HepG2 (cell line): ENCODE measurements at regions of chr16 and their contacts with region 1.

Region 1: DNA sequence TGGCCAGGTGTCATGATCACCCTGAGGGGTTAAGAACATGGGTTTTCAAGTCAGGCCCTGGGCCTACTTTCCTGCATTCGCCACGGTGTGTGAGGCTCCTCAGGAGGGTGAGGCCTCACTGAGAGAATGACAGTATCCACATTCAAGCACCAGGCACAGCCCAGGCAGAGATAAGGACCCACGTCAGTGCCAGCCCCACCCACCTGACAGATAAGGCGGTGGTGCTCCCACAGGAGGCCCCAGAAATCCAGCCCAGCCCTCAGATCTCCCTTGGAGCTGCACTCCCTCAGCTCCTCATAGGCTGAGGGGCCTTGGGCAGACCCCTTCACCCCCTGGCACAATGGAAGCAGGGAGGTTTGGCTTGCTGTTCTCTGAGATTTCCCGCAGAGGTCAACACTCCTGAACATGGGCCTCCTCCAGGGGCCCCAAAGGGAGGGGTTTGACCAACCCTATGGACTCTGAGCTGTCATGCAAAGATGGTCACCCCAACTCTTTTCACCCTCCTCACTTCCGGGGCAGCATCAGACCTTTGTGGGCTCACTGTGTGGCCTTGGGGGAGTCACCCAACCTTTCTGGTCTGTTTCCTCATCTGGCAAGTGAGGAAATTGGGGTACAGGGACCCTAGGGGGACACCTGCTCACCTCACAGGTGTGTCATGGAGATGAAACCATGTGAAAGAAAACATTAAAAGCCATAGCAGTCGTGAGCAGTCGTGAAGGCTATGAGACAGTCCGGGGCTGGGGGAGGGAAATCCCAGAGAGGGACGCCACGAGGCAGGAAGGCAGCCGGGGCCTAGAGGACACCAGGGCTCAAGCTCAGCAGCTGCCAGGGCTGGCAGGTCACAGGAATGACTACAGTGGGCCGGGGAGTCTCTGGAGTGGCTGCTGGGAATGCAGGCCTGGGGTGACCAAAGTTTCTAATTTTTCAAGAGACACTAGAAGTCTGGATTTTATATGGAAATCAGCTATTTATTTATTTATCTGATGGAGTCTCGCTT is 15.4 kb downstream of the PLLP start:
- DNase-seq: peak; percentile 56
- ATAC-seq: peak; percentile 40
- H3K4me3 ChIP-seq: peak overlapping the region in 1 of 3 experiments; percentile 29; a peak in 2 of 6 replicates
- H3K27ac ChIP-seq: peak overlapping the region; percentile 29
- H3K4me1 ChIP-seq: peaks cover 82% of the 10 kb centered on the region
- H3K27me3 ChIP-seq: no peaks in the 10 kb centered on the region
- CTCF ChIP-seq: no peak
- EP300 ChIP-seq: no peak
- POLR2A ChIP-seq: no peak
- RAD21 ChIP-seq: no peak

Region 2: DNA sequence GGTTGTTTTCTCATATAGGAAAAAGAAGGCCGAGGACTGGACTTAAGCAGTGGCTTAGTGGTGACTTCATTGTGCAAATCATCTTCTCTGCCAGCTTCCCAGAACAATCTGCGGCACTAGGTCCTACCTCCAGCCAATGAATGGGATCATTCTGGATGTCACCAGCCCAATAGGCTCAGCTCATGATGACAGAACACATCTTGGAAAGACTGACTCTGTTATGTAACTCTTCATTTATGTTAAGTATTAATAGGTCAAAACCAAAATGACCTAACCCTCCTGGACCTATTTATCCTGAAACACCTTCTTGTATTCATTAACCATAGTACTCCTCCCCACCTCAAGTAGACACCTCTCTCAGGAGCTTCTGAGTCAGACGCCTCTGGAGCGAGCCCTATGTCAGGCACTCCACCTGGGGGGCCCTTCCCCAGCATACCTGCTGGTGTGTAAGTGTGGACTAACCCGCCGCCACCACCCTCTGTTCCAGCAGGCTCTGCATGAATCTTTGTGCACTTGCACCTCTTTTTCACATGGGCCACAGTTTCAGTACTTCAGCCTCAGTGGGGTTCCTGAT is 16.9 kb before region 1 on chr16:
- CTCF ChIA-PET with region 1: no interaction called
- POLR2A ChIA-PET with region 1: no interaction called
- in situ Hi-C with region 1: no loop called
- intact Hi-C with region 1: loop called (anchors 2 kb)
- DNase-seq: peak; percentile 32
- ATAC-seq: peak; percentile 54
- H3K4me3 ChIP-seq: no peak overlapping the region
- H3K27ac ChIP-seq: no peak overlapping the region
- H3K4me1 ChIP-seq: peaks cover 32% of the 10 kb centered on the region
- H3K27me3 ChIP-seq: no peaks in the 10 kb centered on the region
- CTCF ChIP-seq: no peak
- EP300 ChIP-seq: no peak
- POLR2A ChIP-seq: no peak
- RAD21 ChIP-seq: no peak

Region 3: DNA sequence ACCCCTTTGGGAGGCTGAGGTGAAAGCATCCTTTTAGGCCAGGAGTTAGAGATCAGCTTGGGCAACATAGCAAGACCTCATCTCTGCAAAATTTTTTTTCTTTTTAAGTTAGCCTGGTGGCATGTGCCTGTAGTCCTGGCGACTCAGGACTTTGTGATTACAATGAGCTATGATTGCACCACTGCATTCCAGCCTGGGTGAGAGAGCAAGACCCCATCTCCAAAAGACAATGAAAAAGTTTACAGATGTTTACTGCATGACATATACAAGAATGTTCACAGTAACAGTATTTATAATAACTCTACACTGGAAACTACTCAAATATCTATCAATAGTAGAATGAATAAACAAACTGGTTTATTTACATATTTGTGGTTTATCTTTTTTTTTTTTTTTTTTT is 56.4 kb after region 1 on chr16:
- CTCF ChIA-PET with region 1: no interaction called
- POLR2A ChIA-PET with region 1: no interaction called
- in situ Hi-C with region 1: no loop called
- intact Hi-C with region 1: no loop called
- DNase-seq: peak; percentile 43
- ATAC-seq: peak; percentile 64
- H3K4me3 ChIP-seq: no peak overlapping the region
- H3K27ac ChIP-seq: no peak overlapping the region
- H3K4me1 ChIP-seq: peaks cover 15% of the 10 kb centered on the region; the same call in 1 of the 2 replicates
- H3K27me3 ChIP-seq: no peaks in the 10 kb centered on the region
- CTCF ChIP-seq: no peak
- EP300 ChIP-seq: no peak
- POLR2A ChIP-seq: no peak
- RAD21 ChIP-seq: no peak